B cell (primary cell): ENCODE measurements at regions of chr13 and their contacts with region 1.

Region 1: DNA sequence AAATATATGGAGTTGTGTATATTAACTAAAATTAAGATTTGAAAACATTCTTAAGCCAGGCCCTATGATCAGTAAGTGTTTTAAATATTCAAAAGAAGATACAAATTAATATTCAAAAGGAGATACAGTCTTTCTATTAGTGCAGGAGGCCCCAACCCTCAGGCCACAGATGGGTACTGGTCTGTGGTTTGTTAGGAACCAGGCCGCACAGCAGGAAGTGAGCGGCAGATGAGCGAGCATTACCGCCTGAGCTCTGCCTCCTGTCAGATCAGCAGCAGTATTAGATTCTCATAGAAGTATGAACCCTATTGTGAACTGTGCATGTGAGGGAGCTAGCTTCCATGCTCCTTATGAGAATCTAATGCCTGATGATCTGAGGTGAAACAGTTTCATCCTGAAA is 232.9 kb downstream of the FOXO1 start:
- DNase-seq: peak; percentile 71
- ATAC-seq: peak; percentile 64
- H3K4me3 ChIP-seq: no peak overlapping the region
- H3K4me3 Mint-ChIP-seq: peak overlapping the region; percentile 53
- H3K27ac ChIP-seq: peak overlapping the region; percentile 71 to 81
- H3K27ac Mint-ChIP-seq: peak overlapping the region; percentile 85
- H3K4me1 ChIP-seq: peaks cover 88 to 90% of the 10 kb centered on the region in 2 donors
- H3K4me1 Mint-ChIP-seq: peaks cover 86% of the 10 kb centered on the region
- H3K27me3 ChIP-seq: no peaks in the 10 kb centered on the region
- H3K27me3 Mint-ChIP-seq: no peaks in the 10 kb centered on the region
- CTCF ChIP-seq: no peak

Region 2: DNA sequence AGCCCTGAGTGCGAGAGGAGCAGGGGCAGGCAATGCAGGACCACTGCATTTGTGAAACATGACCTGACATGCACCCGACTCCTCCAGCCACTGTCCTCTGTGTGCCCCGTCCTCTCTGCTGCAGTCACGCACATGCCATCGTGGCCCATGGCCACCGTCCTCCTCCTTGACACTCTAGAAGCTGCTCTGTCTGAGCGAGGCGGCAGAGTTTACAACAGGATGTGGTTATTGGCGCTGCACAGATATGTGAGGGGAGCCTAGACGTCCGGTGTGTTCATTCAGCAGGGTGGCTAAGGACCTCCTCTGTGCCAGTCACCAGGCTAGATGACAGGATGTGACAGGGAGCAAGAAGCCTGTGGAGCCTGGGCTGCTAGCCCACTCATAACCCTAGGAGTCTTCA is 45.0 kb before region 1 on chr13:
- CTCF ChIA-PET with region 1: interaction called, 3 read pairs
- POLR2A ChIA-PET with region 1: no interaction called
- intact Hi-C with region 1: loop called (anchors 2 kb)
- DNase-seq: peak; percentile 80
- ATAC-seq: peak; percentile 94
- H3K4me3 ChIP-seq: peak overlapping the region in 4 of 5 experiments; percentile 9 to 66 (median 48)
- H3K4me3 Mint-ChIP-seq: peak overlapping the region; percentile 90
- H3K27ac ChIP-seq: peak overlapping the region; percentile 75 to 95
- H3K27ac Mint-ChIP-seq: peak overlapping the region; percentile 98
- H3K4me1 ChIP-seq: peaks cover 25 to 31% of the 10 kb centered on the region in 2 donors
- H3K4me1 Mint-ChIP-seq: peaks cover 26% of the 10 kb centered on the region
- H3K27me3 ChIP-seq: no peaks in the 10 kb centered on the region
- H3K27me3 Mint-ChIP-seq: no peaks in the 10 kb centered on the region
- CTCF ChIP-seq: no peak

Region 3: DNA sequence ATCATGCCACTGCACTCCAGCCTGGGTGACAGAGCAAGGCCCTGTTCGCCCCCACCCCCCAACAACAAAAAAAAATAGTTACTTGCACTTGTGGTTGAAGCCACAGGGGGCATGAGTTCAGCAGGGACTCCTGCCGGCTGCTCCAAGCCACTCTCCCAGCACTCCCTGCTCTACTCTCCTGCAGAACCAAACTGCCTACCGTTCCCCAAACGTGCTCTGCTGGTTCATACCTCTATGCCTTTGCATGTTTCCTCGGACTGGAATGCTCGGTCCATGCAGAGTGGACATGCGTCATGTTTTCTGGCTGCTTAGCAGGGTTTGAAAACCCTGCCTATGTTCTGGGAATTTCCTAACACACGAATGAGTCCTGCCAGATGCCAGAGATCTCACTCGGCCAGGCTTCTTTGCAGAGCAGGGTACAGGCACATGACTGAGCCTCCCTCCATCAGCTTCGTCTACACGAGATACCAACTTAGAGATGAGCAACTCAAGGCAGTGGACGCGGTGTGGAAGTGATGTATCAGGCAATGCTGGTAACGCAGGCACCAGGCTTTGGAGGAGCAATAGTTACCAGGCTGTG is 347.3 kb after region 1 on chr13:
- CTCF ChIA-PET with region 1: no interaction called
- POLR2A ChIA-PET with region 1: no interaction called
- intact Hi-C with region 1: no loop called
- DNase-seq: no peak
- ATAC-seq: no peak
- H3K4me3 ChIP-seq: no peak overlapping the region
- H3K4me3 Mint-ChIP-seq: no peak overlapping the region
- H3K27ac ChIP-seq: no peak overlapping the region
- H3K27ac Mint-ChIP-seq: no peak overlapping the region
- H3K4me1 ChIP-seq: peaks cover 11 to 29% of the 10 kb centered on the region in 2 donors
- H3K4me1 Mint-ChIP-seq: peaks cover 22% of the 10 kb centered on the region
- H3K27me3 ChIP-seq: no peaks in the 10 kb centered on the region
- H3K27me3 Mint-ChIP-seq: no peaks in the 10 kb centered on the region
- CTCF ChIP-seq: no peak